ENCODE measurements at regions of chr20 and their contacts with region 1.

Region 1: GRCh38 chr20:49245921-49246740 is 26.9 kb downstream of the DDX27 start:
- DNase-seq: peak; percentile 68
- H3K4me3 ChIP-seq: no peak overlapping the region; a peak in 1 of 4 replicates
- H3K27ac ChIP-seq: peak overlapping the region in 1 of 2 experiments; percentile 22; a peak in 2 of 4 replicates
- H3K4me1 ChIP-seq: no peaks in the 10 kb centered on the region; a peak in 1 of 4 replicates
- H3K27me3 ChIP-seq: no peaks in the 10 kb centered on the region
- CTCF ChIP-seq: peak; percentile 79
- EP300 ChIP-seq: no peak
- RAD21 ChIP-seq: peak; percentile 71

Region 2: GRCh38 chr20:49078296-49078695 is 167.8 kb before region 1 on chr20:
- CTCF ChIA-PET with region 1: no interaction called
- POLR2A ChIA-PET with region 1: no interaction called
- DNase-seq: no peak
- H3K4me3 ChIP-seq: no peak overlapping the region
- H3K27ac ChIP-seq: no peak overlapping the region
- H3K4me1 ChIP-seq: no peaks in the 10 kb centered on the region
- H3K27me3 ChIP-seq: no peaks in the 10 kb centered on the region
- CTCF ChIP-seq: no peak
- EP300 ChIP-seq: no peak
- RAD21 ChIP-seq: no peak

Region 3: GRCh38 chr20:49148601-49149000 is 97.5 kb before region 1 on chr20:
- CTCF ChIA-PET with region 1: no interaction called
- POLR2A ChIA-PET with region 1: no interaction called
- DNase-seq: no peak
- H3K4me3 ChIP-seq: no peak overlapping the region
- H3K27ac ChIP-seq: no peak overlapping the region
- H3K4me1 ChIP-seq: no peaks in the 10 kb centered on the region
- H3K27me3 ChIP-seq: no peaks in the 10 kb centered on the region
- CTCF ChIP-seq: no peak
- EP300 ChIP-seq: no peak
- RAD21 ChIP-seq: no peak

Region 4: DNA sequence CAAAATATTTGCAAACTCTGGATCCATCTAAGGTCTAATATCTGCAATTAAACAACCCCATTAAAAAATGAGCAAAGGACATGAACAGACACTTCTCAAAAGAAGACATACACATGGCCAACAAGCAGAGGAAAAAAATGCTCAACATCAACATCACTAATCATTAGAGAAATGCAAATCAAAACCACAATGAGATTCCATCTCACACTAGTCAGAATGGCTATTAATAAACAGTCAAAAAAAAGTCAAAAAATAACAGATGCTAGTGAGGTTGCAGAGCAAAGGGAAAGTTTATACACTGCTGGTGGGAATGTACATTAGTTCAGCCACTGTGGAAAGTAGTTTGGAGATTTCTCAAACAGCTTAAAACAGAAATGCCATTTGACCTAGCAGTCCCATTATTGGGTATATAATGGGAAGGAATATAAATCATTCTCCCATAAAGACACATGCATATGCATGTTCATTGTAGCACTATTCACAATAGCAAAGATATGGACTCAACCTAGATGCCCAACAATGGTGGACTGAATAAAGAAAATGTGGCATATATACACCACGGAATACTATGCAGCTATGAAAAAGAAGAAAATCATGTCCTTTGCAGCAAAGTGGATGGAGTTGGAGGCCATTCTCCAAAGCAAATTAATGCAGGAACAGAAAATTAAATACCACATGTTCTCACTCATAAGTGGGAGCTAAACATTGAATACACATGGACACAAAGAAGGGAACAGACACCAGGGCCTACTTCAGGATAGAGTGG is 22.7 kb after region 1 on chr20:
- CTCF ChIA-PET with region 1: interaction called, 15 read pairs
- POLR2A ChIA-PET with region 1: no interaction called
- DNase-seq: no peak
- H3K4me3 ChIP-seq: no peak overlapping the region
- H3K27ac ChIP-seq: peak overlapping the region in 1 of 2 experiments; percentile 47; a peak in 2 of 4 replicates
- H3K4me1 ChIP-seq: no peaks in the 10 kb centered on the region
- H3K27me3 ChIP-seq: no peaks in the 10 kb centered on the region
- CTCF ChIP-seq: 0 out of 2 replicates have a peak, but pooled peaks have one; percentile 7
- EP300 ChIP-seq: 0 out of 4 replicates have a peak, but pooled peaks of 1 of the 2 experiments have one; percentile 16
- RAD21 ChIP-seq: no peak

Region 5: GRCh38 chr20:49323622-49324238 is 77.6 kb after region 1 on chr20:
- CTCF ChIA-PET with region 1: interaction called, 22 read pairs
- POLR2A ChIA-PET with region 1: no interaction called
- DNase-seq: peak; percentile 41
- H3K4me3 ChIP-seq: no peak overlapping the region
- H3K27ac ChIP-seq: no peak overlapping the region; a peak in 1 of 4 replicates
- H3K4me1 ChIP-seq: peaks cover 0 to 8% of the 10 kb centered on the region in 2 experiments; a peak in 1 of 4 replicates
- H3K27me3 ChIP-seq: peaks cover 14% of the 10 kb centered on the region
- CTCF ChIP-seq: peak; percentile 56
- EP300 ChIP-seq: no peak
- RAD21 ChIP-seq: peak; percentile 72

Region 6: GRCh38 chr20:49534255-49534712 is 288.2 kb after region 1 on chr20:
- CTCF ChIA-PET with region 1: interaction called, 11 read pairs
- POLR2A ChIA-PET with region 1: no interaction called
- DNase-seq: peak; percentile 79
- H3K4me3 ChIP-seq: no peak overlapping the region
- H3K27ac ChIP-seq: no peak overlapping the region
- H3K4me1 ChIP-seq: peaks cover 0 to 5% of the 10 kb centered on the region in 2 experiments; a peak in 1 of 4 replicates
- H3K27me3 ChIP-seq: no peaks in the 10 kb centered on the region
- CTCF ChIP-seq: peak; percentile 80
- EP300 ChIP-seq: no peak; a peak in 1 of 4 replicates
- RAD21 ChIP-seq: peak; percentile 85

Measured in SK-N-SH (cell line).